Upper lobe of right lung (tissue), 1 donor: ENCODE measurements at regions of chr3 and their contacts with region 1.

Region 1: DNA sequence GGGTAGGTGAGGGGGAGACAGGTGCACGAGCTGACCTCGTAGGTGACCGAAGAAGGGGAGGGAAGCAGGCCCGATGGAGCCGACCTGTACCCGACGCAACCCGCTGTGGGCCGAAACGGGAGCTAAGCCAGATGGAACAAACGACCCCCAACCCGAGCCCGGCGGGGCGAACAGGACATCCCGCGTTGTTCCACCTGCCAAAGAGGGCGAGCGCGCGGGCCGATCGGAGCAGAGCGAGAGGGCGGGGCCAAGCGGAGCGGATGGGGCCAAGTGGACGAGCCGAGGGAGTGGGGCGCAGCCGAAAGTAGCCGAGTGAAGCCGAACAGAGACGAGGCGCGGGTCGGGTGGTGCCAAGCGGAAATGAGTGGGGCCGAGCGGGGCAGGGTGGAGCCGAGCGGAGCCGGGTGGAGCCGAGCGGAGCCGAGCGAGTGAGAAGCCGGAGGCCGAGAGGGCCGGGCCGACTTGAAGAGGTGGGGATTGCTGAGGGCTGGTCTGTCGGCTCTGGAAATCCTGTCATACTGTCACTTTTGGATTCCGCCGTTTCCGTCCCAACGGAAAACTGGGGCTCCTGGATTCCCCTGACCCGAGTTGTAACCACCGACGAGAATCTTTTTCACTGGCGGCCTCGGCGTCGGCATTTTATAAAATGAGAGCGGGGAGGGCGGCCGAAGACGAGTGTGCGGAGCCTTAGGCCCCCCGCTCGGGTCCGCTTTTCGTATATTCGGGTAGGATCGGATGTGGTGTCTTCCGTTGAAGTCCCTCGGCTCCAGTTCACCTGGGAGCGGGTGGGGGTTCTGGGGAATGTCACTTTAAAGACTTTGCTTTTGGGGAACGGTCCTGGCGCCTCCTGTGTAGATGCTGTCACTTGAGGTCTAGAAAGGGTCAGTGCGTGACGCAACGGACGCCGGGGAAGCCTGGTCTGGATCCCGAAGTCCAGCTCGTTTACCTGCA is 15.6 kb upstream of the WNT7A start:
- DNase-seq: peak; percentile 97
- ATAC-seq: peak; percentile 98
- H3K4me3 ChIP-seq: peak overlapping the region; percentile 61
- H3K27ac ChIP-seq: peak overlapping the region; percentile 74
- H3K4me1 ChIP-seq: peaks cover 11% of the 10 kb centered on the region
- H3K27me3 ChIP-seq: no peaks in the 10 kb centered on the region
- CTCF ChIP-seq: no peak

Region 2: GRCh38 chr3:13782501-13782900 is 112.9 kb before region 1 on chr3:
- intact Hi-C with region 1: no loop called
- DNase-seq: no peak
- ATAC-seq: no peak
- H3K4me3 ChIP-seq: no peak overlapping the region
- H3K27ac ChIP-seq: no peak overlapping the region
- H3K4me1 ChIP-seq: peaks cover 4% of the 10 kb centered on the region
- H3K27me3 ChIP-seq: no peaks in the 10 kb centered on the region
- CTCF ChIP-seq: no peak

Region 3: DNA sequence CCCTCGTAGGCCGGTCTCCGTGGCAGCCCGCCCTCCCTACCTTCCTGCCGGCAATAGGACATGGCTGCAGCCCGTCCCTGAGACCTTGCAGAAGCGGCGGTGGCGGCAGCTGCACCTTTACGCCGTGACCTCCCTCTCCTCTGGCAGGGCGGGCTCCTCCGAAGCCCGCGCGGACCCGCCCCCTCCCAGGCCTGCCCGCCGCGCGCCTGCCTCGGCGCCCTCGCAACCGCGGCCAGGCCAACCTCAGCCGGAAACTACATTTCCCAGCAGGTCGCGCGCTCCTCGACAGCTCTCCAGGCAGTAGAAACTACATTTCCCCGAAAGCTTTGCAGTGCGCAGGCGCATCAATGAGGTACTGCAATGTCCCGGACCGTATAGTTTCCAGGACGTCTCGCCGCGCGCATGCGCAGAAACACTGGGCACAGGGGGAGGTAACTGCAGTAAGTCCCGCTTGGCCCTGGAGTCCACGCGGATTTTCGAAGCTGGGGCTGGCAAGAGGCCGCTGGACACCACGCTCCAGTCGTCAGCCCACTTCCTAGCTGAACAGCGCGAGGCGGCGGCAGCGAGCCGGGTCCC is 229.3 kb after region 1 on chr3 and contains the starts of genes CHCHD4 and TMEM43:
- intact Hi-C with region 1: loop called (anchors 10 kb)
- DNase-seq: peak; percentile 100
- ATAC-seq: peak; percentile 89
- H3K4me3 ChIP-seq: peak within 1 kb of the TSS; percentile 96
- H3K27ac ChIP-seq: peak within 1 kb of the TSS; percentile 98
- H3K4me1 ChIP-seq: peaks cover 30% of the 10 kb centered on the region
- H3K27me3 ChIP-seq: no peaks in the 10 kb centered on the region
- CTCF ChIP-seq: no peak
- total RNA-seq, gene CHCHD4: 12.0 TPM
- total RNA-seq, gene TMEM43: 86.3 TPM